ENCODE measurements at regions of chr6 and their contacts with region 1.

Region 1: DNA sequence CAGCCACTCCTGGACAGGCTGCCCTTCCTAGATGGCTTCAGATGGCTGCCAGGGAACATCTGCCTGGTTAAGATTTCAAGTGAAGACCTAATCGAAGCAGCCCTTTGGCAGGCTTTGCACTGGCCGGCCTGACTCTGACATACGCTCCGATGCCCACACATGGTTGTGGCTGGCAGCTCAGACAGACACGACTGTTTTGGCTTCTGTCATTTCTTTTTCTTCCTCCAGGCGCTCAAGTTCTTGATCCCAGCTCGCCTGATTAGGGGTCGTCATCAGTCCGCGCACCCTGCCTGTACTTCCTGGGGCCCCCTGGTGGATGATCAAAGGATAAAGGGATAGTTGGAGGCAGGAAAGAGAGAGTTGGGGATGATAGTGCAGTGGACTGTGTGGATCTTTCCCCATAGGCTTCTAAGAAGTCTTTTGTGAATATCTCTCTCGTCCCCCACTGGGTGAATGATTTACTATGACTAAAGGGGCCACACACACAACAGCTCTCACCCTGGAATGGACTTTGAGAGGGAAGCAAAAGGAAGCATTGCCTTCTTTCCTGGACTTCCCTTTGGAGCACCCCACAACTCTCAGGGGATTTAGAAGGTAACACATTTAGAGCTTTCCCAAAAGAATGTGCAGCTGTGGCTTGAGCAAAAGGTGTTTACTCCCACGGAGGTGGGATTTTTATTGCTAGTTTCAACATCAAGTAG is 21.4 kb upstream of the TRAM2 start:
- DNase-seq: peak; percentile 79
- H3K4me3 Mint-ChIP-seq: peak overlapping the region; percentile 2
- H3K27ac Mint-ChIP-seq: no peak overlapping the region
- H3K4me1 Mint-ChIP-seq: peaks cover 21% of the 10 kb centered on the region
- H3K27me3 Mint-ChIP-seq: peaks cover 13% of the 10 kb centered on the region
- CTCF ChIP-seq: peak; percentile 68

Region 2: GRCh38 chr6:52503848-52504781 is 94.2 kb before region 1 on chr6:
- CTCF ChIA-PET with region 1: no interaction called
- intact Hi-C with region 1: loop called (anchors 5 kb)
- DNase-seq: peak; percentile 99
- H3K4me3 Mint-ChIP-seq: peak overlapping the region; percentile 28
- H3K27ac Mint-ChIP-seq: peak overlapping the region; percentile 25
- H3K4me1 Mint-ChIP-seq: peaks cover 40% of the 10 kb centered on the region
- H3K27me3 Mint-ChIP-seq: no peaks in the 10 kb centered on the region
- CTCF ChIP-seq: no peak

Region 3: DNA sequence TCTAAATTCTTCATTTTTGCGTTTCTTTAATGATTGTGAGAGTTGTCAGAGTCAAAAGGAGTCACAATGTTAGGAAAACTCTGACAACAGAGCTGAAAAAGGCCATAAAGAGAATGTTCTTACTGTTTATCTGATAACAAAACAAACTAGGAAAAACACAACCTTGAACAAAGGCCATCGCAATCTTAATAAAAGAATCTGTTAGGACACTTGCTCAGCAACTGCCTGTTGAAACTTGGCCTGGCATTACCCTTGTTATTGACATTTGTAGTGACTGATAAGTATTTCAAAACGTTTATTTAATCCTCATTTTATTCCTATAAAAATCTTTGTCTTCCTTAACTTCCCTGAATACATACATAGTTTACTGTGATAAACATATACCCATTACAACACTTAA is 189.6 kb after region 1 on chr6:
- CTCF ChIA-PET with region 1: no interaction called
- intact Hi-C with region 1: no loop called
- DNase-seq: no peak
- H3K4me3 Mint-ChIP-seq: no peak overlapping the region
- H3K27ac Mint-ChIP-seq: no peak overlapping the region
- H3K4me1 Mint-ChIP-seq: no peaks in the 10 kb centered on the region
- H3K27me3 Mint-ChIP-seq: peaks cover 41% of the 10 kb centered on the region
- CTCF ChIP-seq: no peak